ENCODE measurements at regions of chr1 and their contacts with region 1.

Region 1: GRCh38 chr1:223074445-223075300 is 68.4 kb downstream of the TLR5 start:
- DNase-seq: no peak
- ATAC-seq: no peak
- H3K4me3 ChIP-seq: no peak overlapping the region
- H3K27ac ChIP-seq: no peak overlapping the region
- H3K4me1 ChIP-seq: no peaks in the 10 kb centered on the region
- H3K27me3 ChIP-seq: no peaks in the 10 kb centered on the region
- CTCF ChIP-seq: no peak

Region 2: DNA sequence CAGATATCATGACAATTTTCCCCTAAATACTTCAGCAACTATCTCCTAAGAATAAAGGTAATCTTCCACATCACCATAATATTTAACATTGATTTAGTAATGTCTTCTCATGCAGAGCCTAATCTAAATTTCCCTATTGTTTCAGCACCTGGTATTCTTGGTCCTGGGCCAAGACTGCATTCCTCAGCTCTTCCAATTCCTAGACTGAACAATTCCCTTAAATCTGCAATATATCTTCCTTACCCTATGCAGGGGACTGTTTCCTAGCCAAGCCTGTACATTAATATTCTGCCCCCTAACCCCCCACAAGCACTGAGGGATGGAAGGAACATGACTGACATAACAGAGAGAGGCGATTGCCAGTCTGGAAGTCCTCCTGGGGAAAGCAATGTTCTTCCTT is 288.6 kb before region 1 on chr1:
- intact Hi-C with region 1: loop called in 1 of 3 experiments (anchors 10 kb)
- DNase-seq: no peak
- ATAC-seq: peak in 1 of 4 donors; percentile 17
- H3K4me3 ChIP-seq: no peak overlapping the region
- H3K27ac ChIP-seq: no peak overlapping the region
- H3K4me1 ChIP-seq: no peaks in the 10 kb centered on the region
- H3K27me3 ChIP-seq: no peaks in the 10 kb centered on the region
- CTCF ChIP-seq: no peak

Region 3: GRCh38 chr1:222814536-222815439 is 259.9 kb before region 1 on chr1 and contains the start of gene DISP1:
- intact Hi-C with region 1: no loop called
- DNase-seq: peak; percentile 80 to 94 (median 89)
- ATAC-seq: peak; percentile 96 to 99 (median 98)
- H3K4me3 ChIP-seq: peak within 1 kb of the TSS; percentile 63 to 72 (median 67)
- H3K27ac ChIP-seq: peak within 1 kb of the TSS; percentile 53 to 95 (median 76)
- H3K4me1 ChIP-seq: peaks cover 0 to 13% (median 0%) of the 10 kb centered on the region in 3 donors
- H3K27me3 ChIP-seq: no peaks in the 10 kb centered on the region
- CTCF ChIP-seq: no peak
- total RNA-seq, gene DISP1: 1.9 to 6.2 (median 3.3) TPM

Region 4: DNA sequence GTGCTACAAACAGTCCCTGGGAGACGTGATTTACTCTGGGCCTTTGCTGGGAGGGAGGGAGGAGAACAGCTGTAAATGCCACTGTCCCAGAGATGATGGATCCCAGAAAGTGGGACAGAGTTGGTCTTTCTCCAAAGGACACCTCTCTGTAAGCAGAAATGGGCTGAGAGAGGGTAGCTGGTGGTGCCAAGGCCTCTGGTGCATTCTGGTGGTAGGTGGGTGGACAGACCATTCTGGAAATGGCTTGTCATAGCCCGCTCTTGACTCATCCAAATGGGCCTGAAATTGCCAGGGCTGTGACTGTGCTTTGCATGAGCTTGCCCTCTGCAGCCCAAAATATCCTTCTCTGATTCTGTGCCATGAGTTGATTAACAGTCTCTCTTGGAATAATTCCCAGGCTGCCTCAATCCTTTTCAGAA is 354.6 kb after region 1 on chr1:
- intact Hi-C with region 1: no loop called
- DNase-seq: no peak
- ATAC-seq: peak in 3 of 4 donors; percentile 55 to 70 (median 62)
- H3K4me3 ChIP-seq: no peak overlapping the region
- H3K27ac ChIP-seq: no peak overlapping the region
- H3K4me1 ChIP-seq: peaks cover 0 to 13% (median 7%) of the 10 kb centered on the region in 3 donors
- H3K27me3 ChIP-seq: no peaks in the 10 kb centered on the region
- CTCF ChIP-seq: no peak